ENCODE measurements at regions of chr3 and their contacts with region 1.

Region 1: DNA sequence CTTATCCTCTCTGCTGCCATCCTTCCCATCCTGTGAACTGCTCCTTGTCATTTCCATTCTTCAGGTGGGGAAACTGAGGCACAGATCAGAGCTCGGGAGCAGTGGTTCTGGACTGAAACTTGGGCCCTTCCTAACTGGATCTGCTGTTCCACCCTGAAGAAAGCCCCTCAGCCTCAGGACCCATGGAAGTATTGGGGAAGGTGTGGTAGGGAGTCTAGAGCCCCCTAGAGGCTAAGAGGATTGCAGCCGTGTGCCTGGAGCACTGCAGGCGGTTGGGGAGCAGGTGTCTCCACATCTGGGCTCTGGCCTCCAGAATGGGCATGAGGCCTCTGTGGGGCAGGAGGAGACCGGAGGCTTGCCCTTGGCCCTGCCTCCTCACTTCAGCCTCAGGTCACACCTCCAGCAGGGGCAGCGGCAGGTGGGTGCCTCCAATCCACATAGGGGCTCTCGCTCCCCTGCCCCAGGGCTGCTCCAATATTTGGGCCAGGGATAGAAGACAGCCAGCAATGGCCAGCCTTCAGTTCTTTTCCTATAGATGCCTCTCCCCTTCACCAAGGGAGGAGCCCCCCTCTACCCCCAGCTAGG is 28.1 kb downstream of the DNAJB8 start:
- DNase-seq: peak; percentile 60
- ATAC-seq: peak; percentile 77
- H3K4me3 Mint-ChIP-seq: no peak overlapping the region
- H3K27ac Mint-ChIP-seq: no peak overlapping the region
- H3K4me1 Mint-ChIP-seq: peaks cover 29% of the 10 kb centered on the region
- H3K27me3 Mint-ChIP-seq: peaks cover 39% of the 10 kb centered on the region
- CTCF ChIP-seq: peak; percentile 43

Region 2: DNA sequence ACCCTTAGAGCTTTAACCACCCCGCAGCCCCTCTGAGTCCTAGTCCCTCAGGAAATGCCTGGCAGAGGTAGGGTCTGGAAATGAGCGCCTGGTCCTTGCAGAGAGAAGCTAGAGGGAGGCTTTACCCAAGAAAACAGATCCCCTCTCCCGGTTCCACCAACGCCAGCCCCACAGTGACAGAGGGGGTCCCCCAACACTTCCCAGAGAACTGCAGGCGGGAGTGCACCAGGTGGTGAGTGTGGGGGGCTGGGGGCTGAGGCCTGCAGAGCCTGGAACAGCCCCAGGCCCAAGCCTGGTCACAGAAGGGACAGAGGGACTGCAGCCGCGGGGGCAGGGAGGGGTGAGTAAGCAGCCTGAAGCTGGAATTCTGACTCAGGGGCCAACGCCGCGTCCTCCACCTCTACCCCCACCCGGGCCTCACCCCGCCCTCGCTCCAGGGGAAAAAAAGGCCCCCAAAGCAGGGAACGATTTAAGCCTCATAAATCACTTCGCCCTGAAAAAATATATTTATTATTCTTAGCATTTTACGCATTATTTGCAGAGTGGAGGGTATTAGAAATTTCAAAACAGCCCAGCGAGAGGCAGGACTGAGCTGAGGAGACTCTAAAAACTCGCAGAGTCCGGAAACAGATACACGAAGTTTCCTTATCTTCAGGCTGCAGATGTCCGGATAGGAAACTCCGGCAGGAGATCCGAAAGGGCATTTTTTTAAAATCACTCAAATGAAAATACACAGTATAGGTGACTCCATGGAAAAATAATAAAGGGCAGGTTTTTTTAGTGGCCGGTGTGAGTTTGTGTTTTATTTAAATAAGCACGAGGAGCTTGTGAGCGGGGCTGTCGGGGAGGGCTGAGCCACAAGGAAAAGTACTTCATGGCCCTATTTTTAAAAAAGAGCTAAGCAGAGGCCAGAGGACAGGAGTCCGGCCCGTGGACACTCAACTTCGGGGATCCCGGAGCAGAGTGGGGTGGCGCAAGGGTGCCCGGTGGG is 44.4 kb after region 1 on chr3:
- CTCF ChIA-PET with region 1: interaction called, 22 read pairs
- POLR2A ChIA-PET with region 1: no interaction called
- DNase-seq: peak; percentile 47
- ATAC-seq: no peak
- H3K4me3 Mint-ChIP-seq: peak overlapping the region; percentile 57
- H3K27ac Mint-ChIP-seq: no peak overlapping the region
- H3K4me1 Mint-ChIP-seq: peaks cover 64% of the 10 kb centered on the region
- H3K27me3 Mint-ChIP-seq: peaks cover 100% of the 10 kb centered on the region
- CTCF ChIP-seq: no peak

Region 3: GRCh38 chr3:128680602-128681368 is 242.2 kb after region 1 on chr3:
- CTCF ChIA-PET with region 1: no interaction called
- POLR2A ChIA-PET with region 1: no interaction called
- DNase-seq: peak; percentile 100
- ATAC-seq: peak; percentile 98
- H3K4me3 Mint-ChIP-seq: peak overlapping the region; percentile 84
- H3K27ac Mint-ChIP-seq: peak overlapping the region; percentile 99
- H3K4me1 Mint-ChIP-seq: peaks cover 16% of the 10 kb centered on the region
- H3K27me3 Mint-ChIP-seq: peaks cover 46% of the 10 kb centered on the region
- CTCF ChIP-seq: peak; percentile 83

Measured in WTC11 (cell line).